T-cell (primary cell): ENCODE measurements at regions of chr1 and their contacts with region 1.

Region 1: DNA sequence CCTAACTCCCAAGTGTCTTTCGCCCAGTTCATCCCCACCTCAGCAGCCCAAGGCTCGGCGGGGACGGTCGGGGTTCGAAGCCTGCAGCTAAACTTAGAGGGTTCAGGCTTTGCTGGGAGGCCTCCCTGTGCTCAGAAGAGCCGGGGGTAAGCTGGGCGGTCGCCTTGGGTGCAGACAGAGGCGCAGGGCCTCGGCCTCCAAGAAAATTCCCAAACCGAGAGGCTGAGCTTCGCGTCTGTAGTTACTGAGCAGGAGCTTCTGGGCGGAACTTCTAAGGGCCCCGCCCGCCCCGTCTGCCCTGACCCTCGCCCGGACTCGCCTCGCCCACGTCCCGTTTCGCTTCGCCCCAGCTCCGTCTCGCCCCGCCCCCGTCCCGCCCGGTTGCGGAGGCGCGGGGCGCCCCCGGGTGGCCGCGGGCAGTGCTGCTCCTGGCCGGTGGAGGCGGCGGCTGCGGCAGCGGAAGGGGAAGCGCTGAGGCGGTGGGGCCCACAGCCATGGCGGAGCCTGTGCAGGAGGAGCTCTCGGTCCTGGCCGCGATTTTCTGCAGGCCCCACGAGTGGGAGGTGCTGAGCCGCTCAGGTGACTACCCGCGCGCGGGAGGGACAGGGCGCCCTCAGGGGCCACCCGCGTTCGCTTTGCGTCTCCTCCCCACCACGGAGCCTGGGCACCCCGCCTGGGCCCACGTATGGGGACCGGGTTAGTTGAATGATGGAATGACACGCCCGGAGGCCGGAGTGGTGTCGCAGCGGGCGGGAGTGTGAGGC is at the start of gene RWDD3:
- DNase-seq: peak; percentile 78 to 96 (median 90)
- ATAC-seq: peak; percentile 93 to 98 (median 96)
- H3K4me3 ChIP-seq: peak within 1 kb of the TSS; percentile 75 to 94
- H3K4me3 Mint-ChIP-seq: peak within 1 kb of the TSS; percentile 89 to 91 (median 90)
- H3K27ac ChIP-seq: peak within 1 kb of the TSS; percentile 70
- H3K27ac Mint-ChIP-seq: peak within 1 kb of the TSS; percentile 86 to 92
- H3K4me1 ChIP-seq: peaks cover 8 to 17% of the 10 kb centered on the region in 2 experiments
- H3K4me1 Mint-ChIP-seq: peaks cover 37 to 47% (median 46%) of the 10 kb centered on the region in 3 donors
- H3K27me3 ChIP-seq: peaks cover 0 to 2% of the 10 kb centered on the region in 2 experiments
- H3K27me3 Mint-ChIP-seq: peaks cover 13 to 19% of the 10 kb centered on the region in 2 donors
- total RNA-seq, gene RWDD3: 16.7 to 23.4 (median 21.6) TPM

Region 2: DNA sequence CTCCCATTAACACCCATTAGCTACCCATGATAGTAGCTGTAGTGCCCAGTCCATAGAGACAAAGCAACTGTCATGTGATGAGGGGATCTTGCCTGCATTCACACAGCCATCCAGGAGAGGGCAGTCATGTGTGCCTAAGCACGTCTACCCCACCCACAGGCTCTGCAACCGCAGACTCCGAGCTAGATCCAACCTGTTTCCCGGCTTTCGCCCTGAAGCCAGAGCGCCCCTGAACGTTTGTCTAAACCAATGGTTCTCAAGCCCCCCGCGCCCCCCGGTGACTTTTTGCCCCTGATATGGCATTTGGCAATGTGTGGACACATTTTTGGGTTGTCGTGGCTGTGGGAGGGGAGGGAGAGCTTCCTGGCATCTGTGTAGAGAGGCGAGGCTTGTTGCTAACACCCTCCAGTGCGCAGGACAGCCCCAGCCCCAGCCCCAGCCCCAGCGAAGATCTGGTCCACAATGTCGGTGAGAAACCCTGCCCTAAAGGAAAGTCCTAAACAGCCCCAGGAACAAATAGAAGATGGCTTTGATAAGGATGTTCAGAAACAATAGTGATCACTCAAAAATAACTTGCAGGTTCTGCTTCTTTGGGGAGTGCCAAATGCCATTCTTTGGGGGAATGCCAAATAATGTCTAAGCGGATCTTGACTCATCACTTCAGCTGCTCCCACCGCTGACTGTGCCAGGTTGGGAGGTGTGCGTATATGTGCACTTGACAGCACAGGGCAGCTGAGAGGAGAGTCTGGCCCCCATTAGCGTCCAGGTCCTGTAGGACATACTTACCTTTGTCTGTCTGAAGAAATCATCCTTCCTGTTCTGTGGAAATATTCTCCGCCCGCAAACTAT is 379.2 kb before region 1 on chr1:
- CTCF ChIA-PET with region 1: interaction called, 8 to 20 read pairs
- POLR2A ChIA-PET with region 1: interaction called, 3 read pairs
- DNase-seq: peak; percentile 42 to 88 (median 66)
- ATAC-seq: peak; percentile 94 to 98 (median 96)
- H3K4me3 ChIP-seq: peak overlapping the region; percentile 51 to 64
- H3K4me3 Mint-ChIP-seq: no peak overlapping the region
- H3K27ac ChIP-seq: no peak overlapping the region
- H3K27ac Mint-ChIP-seq: no peak overlapping the region
- H3K4me1 ChIP-seq: no peaks in the 10 kb centered on the region
- H3K4me1 Mint-ChIP-seq: no peaks in the 10 kb centered on the region
- H3K27me3 ChIP-seq: peaks cover 3 to 20% of the 10 kb centered on the region in 2 experiments
- H3K27me3 Mint-ChIP-seq: peaks cover 8% of the 10 kb centered on the region in 2 donors

Region 3: DNA sequence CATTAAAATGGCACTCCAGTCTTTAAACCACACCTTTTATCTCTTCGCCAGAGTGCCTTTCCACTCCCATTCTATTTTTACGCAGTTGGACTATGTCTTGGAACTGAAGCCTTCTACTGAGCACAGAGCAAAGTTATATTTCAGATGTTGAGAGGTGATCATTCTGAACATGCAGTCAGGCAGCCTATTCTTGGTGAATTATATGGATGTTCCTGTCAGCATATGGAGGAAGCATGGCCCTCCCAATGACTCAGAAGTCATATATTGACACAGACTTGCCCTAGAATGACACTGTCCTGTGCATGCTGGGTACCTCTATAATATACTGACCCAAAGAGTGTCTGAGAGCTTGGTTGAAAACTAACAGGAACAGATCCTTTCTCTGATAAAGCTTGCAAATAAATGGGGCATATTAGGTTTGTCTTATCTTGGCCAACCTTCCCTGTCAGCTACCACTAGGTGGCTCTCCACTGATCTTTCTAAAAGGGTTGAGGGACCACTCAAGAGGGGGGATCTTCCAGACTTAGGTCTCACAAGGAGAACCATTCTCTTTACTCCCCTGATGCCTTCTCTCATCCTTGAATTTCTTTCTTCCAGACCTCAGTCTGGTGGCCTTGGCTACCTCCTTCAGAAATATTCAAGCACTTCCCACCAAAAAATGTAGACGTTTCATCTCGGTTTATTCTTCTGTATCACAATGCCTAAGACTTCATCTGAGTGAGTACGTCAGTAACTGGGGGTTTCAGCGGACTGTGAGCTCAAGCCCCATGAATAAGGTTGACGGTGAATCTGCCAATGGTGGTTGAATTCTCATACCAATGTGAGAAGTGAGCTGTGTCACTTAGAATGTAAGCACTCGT is 149.4 kb before region 1 on chr1:
- CTCF ChIA-PET with region 1: interaction called, 13 to 16 read pairs
- POLR2A ChIA-PET with region 1: no interaction called
- DNase-seq: peak in 10 of 35 experiments; percentile 4 to 55 (median 9)
- ATAC-seq: peak; percentile 46 to 70 (median 60)
- H3K4me3 ChIP-seq: no peak overlapping the region
- H3K4me3 Mint-ChIP-seq: no peak overlapping the region
- H3K27ac ChIP-seq: no peak overlapping the region
- H3K27ac Mint-ChIP-seq: no peak overlapping the region
- H3K4me1 ChIP-seq: no peaks in the 10 kb centered on the region
- H3K4me1 Mint-ChIP-seq: peaks cover 0 to 9% (median 0%) of the 10 kb centered on the region in 3 donors
- H3K27me3 ChIP-seq: peaks cover 3 to 4% of the 10 kb centered on the region in 2 experiments
- H3K27me3 Mint-ChIP-seq: peaks cover 11 to 14% of the 10 kb centered on the region in 2 donors

Region 4: DNA sequence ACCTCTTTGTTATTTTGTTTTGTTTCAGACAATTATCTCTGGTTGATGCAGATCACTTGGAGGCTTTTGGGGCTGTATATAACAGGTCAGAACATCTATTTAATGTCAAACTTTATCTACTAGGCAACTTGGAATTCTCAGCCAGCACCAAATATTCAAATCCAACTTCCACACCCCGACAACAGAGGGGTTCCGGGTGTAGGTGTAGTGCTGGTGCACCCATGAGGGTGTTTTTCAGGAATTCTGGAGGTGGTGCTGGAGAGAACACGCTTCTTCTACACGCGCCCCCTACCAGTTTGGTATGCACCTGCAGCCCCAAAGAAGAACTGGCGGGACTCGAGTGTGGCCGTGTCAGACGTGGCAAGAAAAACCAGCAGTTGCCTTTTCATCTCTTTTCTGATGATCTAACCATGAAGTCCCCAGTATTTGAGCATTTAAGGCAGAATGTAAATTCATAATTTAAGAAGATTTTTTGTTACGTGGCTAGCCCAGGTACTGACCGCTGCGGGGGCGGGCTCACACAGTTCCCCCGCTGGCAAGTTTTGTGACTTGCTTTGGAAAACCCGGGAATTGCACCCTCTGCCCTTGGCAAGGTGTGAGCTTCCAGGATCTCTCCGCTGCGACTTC is 117.2 kb before region 1 on chr1:
- CTCF ChIA-PET with region 1: interaction called, 3 to 21 read pairs
- POLR2A ChIA-PET with region 1: no interaction called
- DNase-seq: peak; percentile 3 to 65 (median 33)
- ATAC-seq: peak; percentile 67 to 74 (median 70)
- H3K4me3 ChIP-seq: peak overlapping the region; percentile 62 to 82
- H3K4me3 Mint-ChIP-seq: peak overlapping the region; percentile 81 to 90 (median 89)
- H3K27ac ChIP-seq: no peak overlapping the region
- H3K27ac Mint-ChIP-seq: peak overlapping the region; percentile 53 to 71
- H3K4me1 ChIP-seq: peaks cover 0 to 10% of the 10 kb centered on the region in 2 experiments
- H3K4me1 Mint-ChIP-seq: peaks cover 10 to 14% (median 12%) of the 10 kb centered on the region in 3 donors
- H3K27me3 ChIP-seq: peaks cover 18 to 21% of the 10 kb centered on the region in 2 experiments
- H3K27me3 Mint-ChIP-seq: peaks cover 34 to 50% of the 10 kb centered on the region in 2 donors

Region 5: GRCh38 chr1:95197616-95198252 is 36.2 kb before region 1 on chr1:
- CTCF ChIA-PET with region 1: no interaction called
- POLR2A ChIA-PET with region 1: no interaction called
- DNase-seq: no peak
- ATAC-seq: no peak
- H3K4me3 ChIP-seq: no peak overlapping the region
- H3K4me3 Mint-ChIP-seq: no peak overlapping the region
- H3K27ac ChIP-seq: no peak overlapping the region
- H3K27ac Mint-ChIP-seq: no peak overlapping the region
- H3K4me1 ChIP-seq: no peaks in the 10 kb centered on the region
- H3K4me1 Mint-ChIP-seq: no peaks in the 10 kb centered on the region
- H3K27me3 ChIP-seq: no peaks in the 10 kb centered on the region
- H3K27me3 Mint-ChIP-seq: peaks cover 8 to 19% of the 10 kb centered on the region in 2 donors